ENCODE measurements at regions of chr6 and their contacts with region 1.

Region 1: GRCh38 chr6:39203852-39204375 is 25.4 kb downstream of the KCNK5 start:
- DNase-seq: peak; percentile 66 to 78
- H3K4me3 ChIP-seq: no peak overlapping the region
- H3K4me3 Mint-ChIP-seq: peak overlapping the region; percentile 31
- H3K27ac Mint-ChIP-seq: peak overlapping the region; percentile 96
- H3K4me1 ChIP-seq: peaks cover 92% of the 10 kb centered on the region
- H3K4me1 Mint-ChIP-seq: peaks cover 60% of the 10 kb centered on the region
- H3K27me3 ChIP-seq: no peaks in the 10 kb centered on the region
- H3K27me3 Mint-ChIP-seq: no peaks in the 10 kb centered on the region
- CTCF ChIP-seq: no peak

Region 2: DNA sequence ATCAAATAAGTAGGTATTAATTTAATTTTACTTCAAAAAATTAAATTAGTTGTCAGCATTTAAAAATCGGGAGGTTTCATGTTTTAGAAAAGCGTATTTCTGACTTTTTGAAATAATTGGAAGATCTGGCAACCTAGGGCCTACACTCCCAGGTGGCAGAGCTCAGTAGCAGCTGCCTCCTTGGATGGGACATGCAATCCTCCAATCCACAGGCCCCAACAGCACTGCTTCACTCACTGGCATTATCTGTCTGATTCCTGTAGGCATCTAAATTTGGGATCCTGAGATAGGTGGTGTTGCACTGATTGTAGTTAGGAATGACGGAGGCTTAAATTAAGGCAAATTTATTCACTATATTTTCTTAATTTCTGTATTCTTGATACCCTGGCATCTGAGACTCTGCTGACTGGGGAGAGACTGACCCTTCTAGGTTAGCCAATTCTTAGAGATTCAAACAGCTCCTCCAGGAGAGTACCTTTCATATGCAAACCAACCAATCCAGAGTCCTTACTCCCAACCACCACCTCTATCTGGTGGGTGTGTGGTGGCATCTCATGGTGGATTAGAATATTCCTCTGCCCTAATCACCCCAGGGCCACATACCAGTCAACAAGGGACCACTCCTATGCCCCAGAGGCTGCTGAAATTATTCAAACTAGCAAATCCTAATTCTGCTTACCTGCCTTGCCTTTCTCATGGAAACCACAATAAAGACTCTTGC is 302.0 kb before region 1 on chr6:
- CTCF ChIA-PET with region 1: no interaction called
- POLR2A ChIA-PET with region 1: no interaction called
- intact Hi-C with region 1: no loop called
- DNase-seq: no peak
- H3K4me3 ChIP-seq: no peak overlapping the region
- H3K4me3 Mint-ChIP-seq: no peak overlapping the region
- H3K27ac Mint-ChIP-seq: no peak overlapping the region
- H3K4me1 ChIP-seq: peaks cover 1% of the 10 kb centered on the region
- H3K4me1 Mint-ChIP-seq: no peaks in the 10 kb centered on the region
- H3K27me3 ChIP-seq: no peaks in the 10 kb centered on the region
- H3K27me3 Mint-ChIP-seq: no peaks in the 10 kb centered on the region
- CTCF ChIP-seq: no peak

Region 3: DNA sequence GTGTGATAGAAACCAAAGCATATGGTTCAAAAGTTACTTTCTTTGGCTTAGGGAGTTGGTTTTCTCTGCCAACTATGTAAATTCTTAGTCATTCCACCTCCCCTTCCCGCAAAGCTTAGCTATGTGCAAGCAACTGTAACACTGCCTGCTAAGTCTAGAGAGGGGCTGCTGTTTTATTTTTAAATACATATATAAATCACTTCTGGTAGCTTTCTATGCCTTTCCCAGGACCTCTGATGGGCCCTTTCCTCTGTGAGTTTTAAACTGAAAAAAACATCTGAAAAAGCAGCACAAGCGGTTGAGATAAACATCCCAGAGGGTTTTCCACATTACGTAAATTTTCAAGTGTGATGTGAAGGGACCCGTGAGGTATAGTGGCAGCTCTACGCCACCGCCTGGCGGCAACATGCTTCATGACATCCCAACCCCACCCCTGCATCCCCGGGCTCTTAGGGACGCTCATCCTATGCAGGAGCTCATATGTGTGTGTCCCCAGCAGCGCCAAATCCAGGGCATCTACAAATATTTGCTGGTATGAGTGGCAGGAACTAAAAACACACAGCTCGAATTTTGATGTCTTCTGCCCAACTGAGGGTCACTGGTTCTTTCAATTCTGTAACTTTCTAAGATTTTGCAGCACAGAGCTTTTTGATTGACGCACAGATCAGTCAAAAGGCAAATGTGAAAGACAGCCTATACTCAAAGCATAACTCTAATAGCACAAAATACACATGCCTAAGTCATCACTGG is 101.7 kb before region 1 on chr6:
- CTCF ChIA-PET with region 1: no interaction called
- POLR2A ChIA-PET with region 1: no interaction called
- intact Hi-C with region 1: no loop called
- DNase-seq: peak in 1 of 2 experiments; percentile 33
- H3K4me3 ChIP-seq: no peak overlapping the region
- H3K4me3 Mint-ChIP-seq: no peak overlapping the region
- H3K27ac Mint-ChIP-seq: no peak overlapping the region
- H3K4me1 ChIP-seq: no peaks in the 10 kb centered on the region
- H3K4me1 Mint-ChIP-seq: no peaks in the 10 kb centered on the region
- H3K27me3 ChIP-seq: no peaks in the 10 kb centered on the region
- H3K27me3 Mint-ChIP-seq: no peaks in the 10 kb centered on the region
- CTCF ChIP-seq: peak; percentile 21 to 52

Region 4: GRCh38 chr6:39166189-39166911 is 37.6 kb before region 1 on chr6:
- CTCF ChIA-PET with region 1: no interaction called
- POLR2A ChIA-PET with region 1: no interaction called
- intact Hi-C with region 1: no loop called
- DNase-seq: peak; percentile 86 to 91
- H3K4me3 ChIP-seq: no peak overlapping the region
- H3K4me3 Mint-ChIP-seq: peak overlapping the region; percentile 10
- H3K27ac Mint-ChIP-seq: no peak overlapping the region
- H3K4me1 ChIP-seq: peaks cover 14% of the 10 kb centered on the region
- H3K4me1 Mint-ChIP-seq: peaks cover 9% of the 10 kb centered on the region
- H3K27me3 ChIP-seq: no peaks in the 10 kb centered on the region
- H3K27me3 Mint-ChIP-seq: no peaks in the 10 kb centered on the region
- CTCF ChIP-seq: peak; percentile 95

Region 5: GRCh38 chr6:39189915-39190544 is 13.9 kb before region 1 on chr6:
- CTCF ChIA-PET with region 1: interaction called, 12 read pairs
- POLR2A ChIA-PET with region 1: no interaction called
- intact Hi-C with region 1: no loop called
- DNase-seq: peak; percentile 67
- H3K4me3 ChIP-seq: no peak overlapping the region
- H3K4me3 Mint-ChIP-seq: no peak overlapping the region
- H3K27ac Mint-ChIP-seq: peak overlapping the region; percentile 25
- H3K4me1 ChIP-seq: peaks cover 10% of the 10 kb centered on the region
- H3K4me1 Mint-ChIP-seq: peaks cover 37% of the 10 kb centered on the region
- H3K27me3 ChIP-seq: no peaks in the 10 kb centered on the region
- H3K27me3 Mint-ChIP-seq: no peaks in the 10 kb centered on the region
- CTCF ChIP-seq: peak; percentile 42 to 73

Region 6: GRCh38 chr6:39843305-39844020 is 639.5 kb after region 1 on chr6:
- CTCF ChIA-PET with region 1: no interaction called
- POLR2A ChIA-PET with region 1: no interaction called
- intact Hi-C with region 1: no loop called
- DNase-seq: peak in 1 of 2 experiments; percentile 12
- H3K4me3 ChIP-seq: no peak overlapping the region
- H3K4me3 Mint-ChIP-seq: no peak overlapping the region
- H3K27ac Mint-ChIP-seq: no peak overlapping the region
- H3K4me1 ChIP-seq: no peaks in the 10 kb centered on the region
- H3K4me1 Mint-ChIP-seq: no peaks in the 10 kb centered on the region
- H3K27me3 ChIP-seq: no peaks in the 10 kb centered on the region
- H3K27me3 Mint-ChIP-seq: peaks cover 11% of the 10 kb centered on the region
- CTCF ChIP-seq: no peak

Measured in Caco-2 (cell line).